ENCODE measurements at regions of chr10 and their contacts with region 1.

Region 1: DNA sequence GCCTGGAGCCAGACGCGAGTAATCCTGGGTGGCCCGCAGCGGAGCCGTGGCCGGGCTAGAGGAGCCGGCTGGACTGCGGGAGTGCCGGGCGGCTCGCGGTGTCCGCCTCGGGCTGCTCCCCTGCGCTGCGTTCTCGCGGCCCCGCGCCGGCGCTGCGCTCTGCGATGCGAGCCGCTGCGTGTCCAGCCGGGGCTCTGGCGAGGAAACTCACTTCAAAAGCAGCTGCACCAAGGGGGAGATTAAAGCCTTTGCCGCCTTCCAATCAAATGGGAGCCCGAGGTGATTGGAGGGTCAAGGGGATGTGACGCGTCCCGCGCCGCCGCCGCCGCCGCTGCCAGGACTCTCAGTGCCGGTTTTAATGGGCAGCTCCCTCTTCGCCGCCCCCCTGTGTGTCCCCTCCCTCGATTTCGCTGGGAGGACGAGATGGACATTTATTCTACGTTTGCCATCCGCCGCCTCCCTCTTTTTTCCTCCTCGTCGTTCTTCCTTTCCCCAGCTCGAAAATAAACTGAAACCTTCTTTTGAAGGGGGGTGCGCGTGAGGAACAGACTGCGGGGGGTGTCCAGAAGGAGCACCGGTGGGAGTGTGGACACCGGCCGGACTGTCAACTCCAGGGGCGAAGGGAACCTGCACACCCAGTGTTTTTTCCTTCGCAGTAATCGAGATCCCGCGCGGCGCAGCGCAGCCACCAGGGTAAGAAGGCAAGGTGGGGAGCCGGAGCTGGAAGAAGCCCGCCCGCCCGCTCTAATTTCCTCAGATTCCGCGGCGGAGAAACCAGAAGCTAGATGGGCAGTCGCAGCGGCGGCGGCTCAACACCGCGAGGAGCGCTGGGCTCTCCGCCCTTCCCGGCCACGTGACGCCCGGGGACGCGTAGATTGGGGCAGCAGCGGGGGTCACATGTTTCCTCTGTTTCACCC is at the start of gene ZNF503:
- DNase-seq: peak; percentile 94
- H3K4me3 ChIP-seq: peak within 1 kb of the TSS; percentile 70 to 88 (median 80)
- H3K27ac ChIP-seq: peak within 1 kb of the TSS; percentile 94 to 99 (median 97)
- H3K4me1 ChIP-seq: peaks cover 0 to 39% (median 25%) of the 10 kb centered on the region in 4 donors
- H3K27me3 ChIP-seq: peaks cover 20% of the 10 kb centered on the region
- CTCF ChIP-seq: peak; percentile 13 to 67 (median 28)
- EP300 ChIP-seq: no peak
- POLR2A ChIP-seq: peak; percentile 82
- total RNA-seq, gene ZNF503: 3.0 to 17.9 (median 7.2) TPM

Region 2: GRCh38 chr10:75303045-75303781 is 98.6 kb before region 1 on chr10:
- in situ Hi-C with region 1: no loop called
- intact Hi-C with region 1: no loop called
- DNase-seq: no peak
- H3K4me3 ChIP-seq: no peak overlapping the region
- H3K27ac ChIP-seq: no peak overlapping the region
- H3K4me1 ChIP-seq: no peaks in the 10 kb centered on the region
- H3K27me3 ChIP-seq: no peaks in the 10 kb centered on the region
- CTCF ChIP-seq: no peak
- EP300 ChIP-seq: no peak
- POLR2A ChIP-seq: no peak

Region 3: GRCh38 chr10:75547391-75548298 is 145.8 kb after region 1 on chr10:
- in situ Hi-C with region 1: no loop called
- intact Hi-C with region 1: loop called (anchors 10 kb)
- DNase-seq: no peak
- H3K4me3 ChIP-seq: no peak overlapping the region
- H3K27ac ChIP-seq: no peak overlapping the region
- H3K4me1 ChIP-seq: peaks cover 0 to 20% (median 4%) of the 10 kb centered on the region in 4 donors
- H3K27me3 ChIP-seq: no peaks in the 10 kb centered on the region
- CTCF ChIP-seq: no peak
- EP300 ChIP-seq: no peak
- POLR2A ChIP-seq: no peak

Region 4: GRCh38 chr10:75651417-75651816 is 249.6 kb after region 1 on chr10:
- in situ Hi-C with region 1: loop called in 2 of 4 experiments (anchors 25 kb)
- intact Hi-C with region 1: loop called (anchors 10 kb)
- DNase-seq: peak; percentile 49
- H3K4me3 ChIP-seq: no peak overlapping the region
- H3K27ac ChIP-seq: no peak overlapping the region
- H3K4me1 ChIP-seq: peaks cover 0 to 19% (median 4%) of the 10 kb centered on the region in 4 donors
- H3K27me3 ChIP-seq: no peaks in the 10 kb centered on the region
- CTCF ChIP-seq: peak; percentile 14 to 49 (median 33)
- EP300 ChIP-seq: no peak
- POLR2A ChIP-seq: no peak

Region 5: GRCh38 chr10:76036111-76036940 is 634.5 kb after region 1 on chr10:
- in situ Hi-C with region 1: loop called (anchors 25 kb)
- intact Hi-C with region 1: loop called (anchors 2 kb)
- DNase-seq: peak; percentile 78
- H3K4me3 ChIP-seq: no peak overlapping the region
- H3K27ac ChIP-seq: peak overlapping the region in 2 of 4 donors; percentile 44 to 48
- H3K4me1 ChIP-seq: peaks cover 0 to 40% (median 12%) of the 10 kb centered on the region in 4 donors
- H3K27me3 ChIP-seq: no peaks in the 10 kb centered on the region
- CTCF ChIP-seq: peak; percentile 86 to 95 (median 90)
- EP300 ChIP-seq: no peak
- POLR2A ChIP-seq: no peak

Region 6: GRCh38 chr10:76558586-76558985 is 1156.8 kb after region 1 on chr10:
- in situ Hi-C with region 1: loop called in 1 of 4 experiments (anchors 25 kb)
- intact Hi-C with region 1: no loop called
- DNase-seq: peak; percentile 32
- H3K4me3 ChIP-seq: no peak overlapping the region
- H3K27ac ChIP-seq: peak overlapping the region; percentile 2 to 76 (median 22)
- H3K4me1 ChIP-seq: peaks cover 0 to 18% (median 5%) of the 10 kb centered on the region in 4 donors
- H3K27me3 ChIP-seq: no peaks in the 10 kb centered on the region
- CTCF ChIP-seq: no peak
- EP300 ChIP-seq: no peak
- POLR2A ChIP-seq: no peak

Measured in transverse colon (tissue), 4 donors.